ENCODE measurements at regions of chr7 and their contacts with region 1.

Region 1: GRCh38 chr7:45021604-45022296 is 21.7 kb downstream of the CCM2 start:
- DNase-seq: no peak
- ATAC-seq: peak; percentile 64
- H3K4me3 ChIP-seq: no peak overlapping the region
- H3K4me3 Mint-ChIP-seq: peak overlapping the region in 8 of 10 donors; percentile 0 to 74 (median 25)
- H3K27ac ChIP-seq: no peak overlapping the region
- H3K27ac Mint-ChIP-seq: peak overlapping the region; percentile 9 to 86 (median 72)
- H3K4me1 ChIP-seq: peaks cover 15 to 24% of the 10 kb centered on the region in 2 donors
- H3K4me1 Mint-ChIP-seq: peaks cover 33 to 73% (median 66%) of the 10 kb centered on the region in 7 donors
- H3K27me3 ChIP-seq: no peaks in the 10 kb centered on the region
- H3K27me3 Mint-ChIP-seq: no peaks in the 10 kb centered on the region

Region 2: DNA sequence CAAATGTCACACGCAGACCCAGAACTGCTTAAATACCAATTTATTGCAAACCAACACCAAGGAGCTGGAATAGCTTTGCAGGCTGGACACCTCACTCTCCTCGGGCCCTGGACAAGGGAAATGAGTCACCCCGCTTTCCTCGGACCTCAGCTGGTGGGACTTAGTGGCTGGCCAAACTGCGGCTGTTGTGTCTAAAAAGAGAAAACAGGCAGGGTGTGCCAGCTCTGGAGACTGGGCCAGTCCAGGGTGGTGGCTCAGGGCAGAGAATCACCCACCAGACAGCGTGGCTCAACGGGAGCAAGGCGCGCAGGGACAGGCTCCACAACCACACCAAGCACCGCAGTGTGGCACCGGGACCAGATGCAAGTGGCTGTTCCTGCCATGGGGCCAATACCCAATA is 638.2 kb before region 1 on chr7:
- CTCF ChIA-PET with region 1: no interaction called
- POLR2A ChIA-PET with region 1: no interaction called
- intact Hi-C with region 1: no loop called
- DNase-seq: no peak
- ATAC-seq: no peak
- H3K4me3 ChIP-seq: no peak overlapping the region
- H3K4me3 Mint-ChIP-seq: no peak overlapping the region
- H3K27ac ChIP-seq: no peak overlapping the region
- H3K27ac Mint-ChIP-seq: peak overlapping the region in 1 of 9 donors; percentile 22
- H3K4me1 ChIP-seq: no peaks in the 10 kb centered on the region
- H3K4me1 Mint-ChIP-seq: peaks cover 0 to 11% (median 0%) of the 10 kb centered on the region in 7 donors
- H3K27me3 ChIP-seq: no peaks in the 10 kb centered on the region
- H3K27me3 Mint-ChIP-seq: no peaks in the 10 kb centered on the region

Region 3: DNA sequence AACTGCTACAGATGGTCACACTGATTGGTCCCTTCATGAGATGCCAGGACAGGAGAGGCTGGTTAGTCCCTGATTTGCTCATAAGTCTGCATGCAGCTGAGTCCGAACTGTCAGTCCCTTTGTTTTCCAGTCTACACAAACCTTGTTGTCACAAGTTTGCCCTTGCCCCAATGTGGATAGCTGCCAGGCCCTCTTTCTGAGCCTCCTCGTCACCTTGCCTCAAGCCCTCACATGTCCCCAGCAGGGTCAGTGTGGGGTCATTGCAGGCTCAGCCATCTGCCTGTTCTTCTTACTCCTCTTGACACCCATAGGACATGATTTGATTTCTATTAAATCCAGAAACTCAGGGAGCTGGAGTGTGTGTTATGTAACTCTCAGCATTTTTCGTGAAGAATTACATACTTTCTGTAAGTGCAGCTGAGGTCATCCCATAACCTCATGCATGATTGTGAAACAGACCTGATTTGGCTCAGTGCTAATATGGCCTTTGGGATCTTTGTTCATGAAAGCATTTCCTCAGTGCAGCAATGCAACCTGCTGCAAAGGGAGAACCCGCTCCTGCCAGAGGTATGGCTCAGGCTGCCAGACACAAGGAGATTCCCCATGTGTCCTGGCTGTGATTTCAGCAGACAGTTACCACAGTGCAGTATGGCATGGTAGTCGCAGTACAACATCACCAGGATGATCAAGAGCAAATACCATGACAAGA is 343.1 kb before region 1 on chr7:
- CTCF ChIA-PET with region 1: no interaction called
- POLR2A ChIA-PET with region 1: no interaction called
- intact Hi-C with region 1: no loop called
- DNase-seq: no peak
- ATAC-seq: no peak
- H3K4me3 ChIP-seq: no peak overlapping the region
- H3K4me3 Mint-ChIP-seq: no peak overlapping the region
- H3K27ac ChIP-seq: no peak overlapping the region
- H3K27ac Mint-ChIP-seq: peak overlapping the region in 3 of 9 donors; percentile 7 to 59 (median 50)
- H3K4me1 ChIP-seq: no peaks in the 10 kb centered on the region
- H3K4me1 Mint-ChIP-seq: peaks cover 0 to 6% (median 0%) of the 10 kb centered on the region in 7 donors
- H3K27me3 ChIP-seq: no peaks in the 10 kb centered on the region
- H3K27me3 Mint-ChIP-seq: no peaks in the 10 kb centered on the region

Region 4: DNA sequence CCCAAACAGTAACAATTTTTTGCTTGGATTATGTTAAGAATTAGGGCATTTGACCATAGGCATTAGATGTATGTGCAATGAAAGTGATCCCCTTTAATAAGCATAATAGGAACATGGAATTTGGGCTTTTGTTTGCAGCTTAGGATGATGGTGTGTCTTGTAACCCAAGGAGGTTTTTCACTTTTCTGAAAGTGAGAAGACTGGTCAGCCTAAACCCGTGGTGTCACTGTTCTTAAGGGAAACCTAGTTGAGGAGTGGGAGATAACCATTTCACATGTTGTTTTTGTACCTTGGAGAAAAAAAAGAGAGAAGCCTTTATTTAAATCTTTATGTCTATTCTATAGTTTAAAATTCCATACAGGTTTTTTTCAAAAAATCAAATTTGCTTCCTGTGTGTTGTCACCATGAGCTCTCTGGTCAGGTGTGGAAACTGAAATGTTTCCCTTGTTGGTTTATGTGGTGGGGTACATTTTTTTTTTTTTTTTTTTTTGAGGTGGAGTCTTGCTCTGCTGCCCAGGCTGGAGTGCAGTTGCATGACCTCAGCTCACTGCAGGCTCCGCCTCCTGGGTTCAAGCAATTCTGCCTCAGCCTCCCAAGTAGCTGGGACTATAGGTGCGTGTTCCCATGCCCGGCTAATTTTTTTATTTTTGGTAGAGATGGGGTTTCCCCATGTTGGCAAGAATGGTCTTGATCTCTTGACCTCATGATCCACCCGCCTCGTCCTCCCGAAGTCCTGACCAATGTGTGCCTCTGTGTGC is 14.0 kb before region 1 on chr7:
- CTCF ChIA-PET with region 1: no interaction called
- POLR2A ChIA-PET with region 1: interaction called, 348 read pairs
- intact Hi-C with region 1: no loop called
- DNase-seq: no peak
- ATAC-seq: no peak
- H3K4me3 ChIP-seq: no peak overlapping the region
- H3K4me3 Mint-ChIP-seq: peak overlapping the region in 3 of 10 donors; percentile 21 to 49 (median 34)
- H3K27ac ChIP-seq: no peak overlapping the region
- H3K27ac Mint-ChIP-seq: peak overlapping the region in 7 of 9 donors; percentile 4 to 74 (median 69)
- H3K4me1 ChIP-seq: peaks cover 3 to 6% of the 10 kb centered on the region in 2 donors
- H3K4me1 Mint-ChIP-seq: peaks cover 25 to 64% (median 54%) of the 10 kb centered on the region in 7 donors
- H3K27me3 ChIP-seq: no peaks in the 10 kb centered on the region
- H3K27me3 Mint-ChIP-seq: no peaks in the 10 kb centered on the region

Measured in naive thymus-derived CD4-positive, alpha-beta T cell (primary cell).